ENCODE measurements at regions of chr13 and their contacts with region 1.

Region 1: DNA sequence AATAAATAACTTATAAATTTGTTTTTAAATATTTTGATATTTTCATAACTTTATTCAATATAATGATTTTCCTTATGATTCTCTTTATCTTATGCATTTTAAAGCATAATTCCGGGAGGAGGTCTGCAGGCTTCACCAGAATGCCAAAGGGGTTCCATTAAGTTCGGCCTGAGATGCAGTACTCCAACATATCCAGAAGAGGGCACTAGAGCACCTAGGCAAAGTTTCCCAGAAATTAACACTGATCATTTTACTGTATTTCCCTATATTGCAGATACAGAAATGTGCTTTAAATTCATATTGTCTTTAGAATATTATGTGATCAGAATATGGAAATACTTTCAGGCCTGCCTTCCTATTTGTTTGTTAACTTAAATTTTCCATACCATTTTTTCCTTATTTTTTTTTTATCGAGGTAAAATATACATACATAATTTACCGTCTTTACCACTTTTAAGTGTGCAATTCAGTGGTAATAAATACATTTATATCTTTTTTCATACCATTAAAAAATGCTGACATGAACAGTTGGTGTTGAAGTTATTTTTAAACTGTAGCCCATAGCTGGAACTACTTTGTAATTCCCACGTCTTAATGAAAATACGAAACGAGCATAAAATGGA is 58.9 kb upstream of the TM9SF2 start:
- DNase-seq: peak; percentile 69
- H3K4me3 Mint-ChIP-seq: no peak overlapping the region
- H3K27ac Mint-ChIP-seq: no peak overlapping the region
- H3K4me1 Mint-ChIP-seq: peaks cover 7% of the 10 kb centered on the region
- H3K27me3 Mint-ChIP-seq: no peaks in the 10 kb centered on the region

Region 2: DNA sequence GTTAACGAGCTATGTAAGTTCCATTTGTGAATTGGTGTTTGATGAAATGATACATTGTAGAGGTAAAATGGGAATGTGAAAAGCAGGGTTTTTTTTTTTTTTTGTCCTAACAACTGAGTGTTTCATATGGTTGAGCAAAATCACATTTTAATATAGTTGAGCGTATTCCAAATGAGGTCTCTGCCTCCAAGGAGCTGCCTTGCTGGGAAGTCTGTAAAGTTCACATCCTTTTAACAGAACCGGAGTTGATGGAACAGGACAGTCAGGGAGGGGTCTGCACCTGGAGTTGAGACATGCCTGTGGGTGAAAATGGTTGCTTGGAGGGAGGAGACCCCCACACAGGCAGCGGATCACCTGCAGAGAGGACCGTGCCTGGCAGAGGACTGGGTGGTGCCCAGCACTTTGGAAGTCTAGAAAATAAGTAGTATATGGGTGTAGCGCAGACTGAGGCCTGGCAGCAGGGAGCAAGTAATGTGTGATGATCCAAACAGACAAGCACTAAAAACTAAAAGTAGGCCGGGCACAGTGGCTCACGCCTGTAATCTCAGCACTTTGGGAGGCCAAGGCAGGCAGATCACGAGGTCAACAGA is 317.0 kb before region 1 on chr13:
- CTCF ChIA-PET with region 1: no interaction called
- intact Hi-C with region 1: no loop called
- DNase-seq: no peak
- H3K4me3 Mint-ChIP-seq: no peak overlapping the region
- H3K27ac Mint-ChIP-seq: no peak overlapping the region
- H3K4me1 Mint-ChIP-seq: peaks cover 36% of the 10 kb centered on the region
- H3K27me3 Mint-ChIP-seq: no peaks in the 10 kb centered on the region

Region 3: DNA sequence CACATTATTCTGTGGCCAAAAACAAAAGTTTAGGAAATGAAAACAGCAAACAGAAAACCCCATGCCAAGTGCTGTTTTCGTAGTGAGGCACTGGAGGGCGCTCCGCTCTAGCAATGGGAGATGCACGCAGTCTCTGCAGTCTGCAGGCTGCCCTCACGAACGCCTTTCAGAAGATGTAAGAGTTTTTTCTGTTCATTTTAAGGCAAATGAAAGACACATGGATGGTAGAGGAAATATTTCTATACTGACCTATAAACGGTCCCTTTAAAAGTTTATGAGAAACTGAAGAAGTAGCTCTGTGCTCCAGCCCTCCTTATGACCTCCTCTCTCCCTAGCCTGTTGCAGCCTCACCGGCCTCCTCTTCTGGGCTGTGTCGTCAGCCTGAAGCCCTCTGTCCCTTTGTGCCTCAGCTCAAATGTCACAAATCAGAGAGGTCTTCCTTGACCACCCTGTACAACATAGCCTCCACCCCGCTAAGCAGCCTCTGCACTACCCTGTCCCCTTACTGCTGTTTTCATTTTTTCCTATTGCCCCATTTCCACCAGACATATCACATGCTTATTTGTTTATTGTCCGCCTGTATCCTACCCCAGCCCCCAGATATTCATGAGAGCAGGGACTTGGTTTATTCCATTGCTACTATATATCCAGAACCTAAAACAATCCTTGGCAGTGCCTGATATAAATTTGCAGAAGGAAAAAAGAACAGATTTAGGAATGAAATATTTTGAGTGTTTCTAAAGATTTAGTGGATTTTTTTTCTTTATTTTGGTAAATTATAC is 175.3 kb after region 1 on chr13:
- CTCF ChIA-PET with region 1: interaction called, 4 read pairs
- intact Hi-C with region 1: loop called (anchors 1 kb)
- DNase-seq: peak; percentile 51
- H3K4me3 Mint-ChIP-seq: no peak overlapping the region
- H3K27ac Mint-ChIP-seq: no peak overlapping the region
- H3K4me1 Mint-ChIP-seq: peaks cover 11% of the 10 kb centered on the region
- H3K27me3 Mint-ChIP-seq: no peaks in the 10 kb centered on the region

Region 4: DNA sequence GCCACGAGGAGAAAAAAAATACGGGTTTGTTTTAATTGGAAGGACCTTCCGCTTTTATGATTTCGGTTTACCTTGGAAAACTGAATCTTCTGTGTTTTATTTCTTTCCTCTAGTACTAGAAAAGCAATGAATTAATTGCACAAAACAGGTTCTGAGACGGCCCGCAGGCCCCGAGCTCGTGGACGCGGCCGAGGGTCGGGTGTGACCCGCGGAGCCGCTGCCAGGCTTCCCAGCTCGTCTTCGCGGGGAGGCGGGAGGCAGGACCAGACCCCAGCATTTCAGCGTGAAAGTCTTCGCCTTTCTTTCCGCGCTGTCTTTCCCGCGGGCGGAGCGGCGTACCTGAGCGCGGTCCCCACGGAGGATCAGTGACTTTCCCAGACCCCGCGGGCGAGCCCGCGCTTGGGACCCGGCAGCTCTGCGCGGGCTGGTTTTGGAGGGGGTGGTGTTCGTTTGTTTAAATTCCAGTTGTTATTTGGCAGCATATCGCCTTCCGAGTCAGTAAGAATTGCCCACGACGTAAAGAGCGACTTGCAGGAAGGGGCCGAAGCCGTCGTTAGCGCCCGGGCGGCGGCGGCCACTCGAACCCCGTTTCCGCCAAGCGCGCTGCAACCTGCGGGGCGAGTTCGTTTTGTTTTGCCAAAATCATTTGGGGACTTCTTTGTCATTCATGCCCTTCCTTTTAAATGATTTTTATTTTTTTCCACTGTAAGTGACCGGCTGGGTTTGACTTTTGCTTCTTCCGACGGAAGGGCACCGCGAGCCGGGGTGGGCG is 453.0 kb after region 1 on chr13:
- CTCF ChIA-PET with region 1: no interaction called
- intact Hi-C with region 1: loop called (anchors 5 kb)
- DNase-seq: no peak
- H3K4me3 Mint-ChIP-seq: peak overlapping the region; percentile 48
- H3K27ac Mint-ChIP-seq: no peak overlapping the region
- H3K4me1 Mint-ChIP-seq: peaks cover 3% of the 10 kb centered on the region
- H3K27me3 Mint-ChIP-seq: peaks cover 44% of the 10 kb centered on the region

Region 5: GRCh38 chr13:100235311-100235901 is 793.0 kb after region 1 on chr13:
- CTCF ChIA-PET with region 1: no interaction called
- intact Hi-C with region 1: loop called (anchors 10 kb)
- DNase-seq: no peak
- H3K4me3 Mint-ChIP-seq: no peak overlapping the region
- H3K27ac Mint-ChIP-seq: no peak overlapping the region
- H3K4me1 Mint-ChIP-seq: peaks cover 5% of the 10 kb centered on the region
- H3K27me3 Mint-ChIP-seq: no peaks in the 10 kb centered on the region

Measured in activated naive CD4-positive, alpha-beta T cell treated with anti-CD3 and anti-CD28 coated beads for 36 hours (primary cell).